Ovary (tissue), 10 donors: ENCODE measurements at regions of chr22 and their contacts with region 1.

Region 1: GRCh38 chr22:28009272-28009827 is 90.3 kb upstream of the PITPNB start:
- DNase-seq: peak; percentile 74 to 86 (median 85)
- H3K4me3 ChIP-seq: no peak overlapping the region
- H3K27ac ChIP-seq: no peak overlapping the region
- H3K4me1 ChIP-seq: no peaks in the 10 kb centered on the region
- H3K27me3 ChIP-seq: no peaks in the 10 kb centered on the region
- CTCF ChIP-seq: peak; percentile 84 to 95 (median 93)
- EP300 ChIP-seq: no peak
- POLR2A ChIP-seq: no peak

Region 2: GRCh38 chr22:26751217-26751616 is 1258.1 kb before region 1 on chr22:
- intact Hi-C with region 1: loop called (anchors 5 to 10 kb)
- DNase-seq: no peak
- H3K4me3 ChIP-seq: no peak overlapping the region
- H3K27ac ChIP-seq: no peak overlapping the region
- H3K4me1 ChIP-seq: peaks cover 5% of the 10 kb centered on the region
- H3K27me3 ChIP-seq: no peaks in the 10 kb centered on the region
- CTCF ChIP-seq: no peak
- EP300 ChIP-seq: no peak
- POLR2A ChIP-seq: no peak

Region 3: GRCh38 chr22:26756675-26757293 is 1252.6 kb before region 1 on chr22:
- intact Hi-C with region 1: loop called (anchors 5 to 10 kb)
- DNase-seq: peak; percentile 53 to 86 (median 79)
- H3K4me3 ChIP-seq: no peak overlapping the region
- H3K27ac ChIP-seq: no peak overlapping the region
- H3K4me1 ChIP-seq: peaks cover 1% of the 10 kb centered on the region
- H3K27me3 ChIP-seq: no peaks in the 10 kb centered on the region
- CTCF ChIP-seq: peak; percentile 85 to 95 (median 95)
- EP300 ChIP-seq: no peak
- POLR2A ChIP-seq: no peak

Region 4: DNA sequence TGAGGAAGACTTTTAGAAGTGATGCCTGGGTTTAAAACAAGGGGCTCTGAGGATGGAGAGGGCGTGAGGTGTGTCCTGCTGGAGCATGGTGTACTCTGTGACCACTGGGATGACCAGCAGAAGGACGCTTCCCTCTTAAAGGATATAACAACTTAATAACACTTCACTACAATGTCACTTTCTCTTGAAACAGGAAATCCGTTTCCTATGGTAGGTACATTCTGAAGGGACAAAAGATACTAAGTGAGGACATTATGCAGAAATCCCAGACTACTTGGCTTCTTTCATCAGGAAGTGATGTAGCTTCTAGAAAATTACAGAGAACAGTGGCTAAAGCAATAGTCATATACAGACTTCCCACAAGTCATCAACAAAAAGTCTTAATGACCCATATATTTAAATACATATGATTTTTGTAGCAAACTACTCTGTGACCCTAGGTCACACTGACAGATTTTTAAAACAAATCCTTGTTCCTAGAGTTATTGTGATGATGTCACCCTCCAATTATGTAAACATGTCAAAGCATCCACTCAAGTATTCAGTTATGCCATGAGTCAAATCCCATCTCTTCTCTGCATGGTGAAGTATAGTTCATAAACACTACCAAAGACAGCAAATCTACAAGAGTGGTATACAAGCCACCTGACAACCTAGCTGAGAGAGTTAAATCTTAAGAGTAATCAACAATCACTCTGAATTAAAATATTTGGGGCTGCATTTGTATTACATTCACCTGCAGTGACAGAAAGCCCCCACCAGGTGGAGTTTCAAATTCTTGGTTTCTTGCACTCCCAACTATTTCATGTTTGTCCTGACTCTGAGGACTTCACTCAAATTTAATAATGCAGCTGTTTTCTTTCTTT is 123.1 kb before region 1 on chr22:
- intact Hi-C with region 1: loop called (anchors 2 to 5 kb)
- DNase-seq: peak in 2 of 5 donors; percentile 45 to 66
- H3K4me3 ChIP-seq: no peak overlapping the region
- H3K27ac ChIP-seq: no peak overlapping the region
- H3K4me1 ChIP-seq: peaks cover 2% of the 10 kb centered on the region
- H3K27me3 ChIP-seq: no peaks in the 10 kb centered on the region
- CTCF ChIP-seq: peak; percentile 59 to 93 (median 92)
- EP300 ChIP-seq: no peak
- POLR2A ChIP-seq: no peak

Region 5: GRCh38 chr22:27930331-27931060 is 78.9 kb before region 1 on chr22:
- intact Hi-C with region 1: no loop called
- DNase-seq: no peak
- H3K4me3 ChIP-seq: no peak overlapping the region
- H3K27ac ChIP-seq: no peak overlapping the region
- H3K4me1 ChIP-seq: no peaks in the 10 kb centered on the region
- H3K27me3 ChIP-seq: no peaks in the 10 kb centered on the region
- CTCF ChIP-seq: no peak
- EP300 ChIP-seq: no peak
- POLR2A ChIP-seq: no peak

Region 6: GRCh38 chr22:27972732-27973698 is 36.3 kb before region 1 on chr22:
- intact Hi-C with region 1: no loop called
- DNase-seq: no peak
- H3K4me3 ChIP-seq: no peak overlapping the region
- H3K27ac ChIP-seq: no peak overlapping the region
- H3K4me1 ChIP-seq: peaks cover 2% of the 10 kb centered on the region
- H3K27me3 ChIP-seq: no peaks in the 10 kb centered on the region
- CTCF ChIP-seq: no peak
- EP300 ChIP-seq: no peak
- POLR2A ChIP-seq: no peak

Region 7: DNA sequence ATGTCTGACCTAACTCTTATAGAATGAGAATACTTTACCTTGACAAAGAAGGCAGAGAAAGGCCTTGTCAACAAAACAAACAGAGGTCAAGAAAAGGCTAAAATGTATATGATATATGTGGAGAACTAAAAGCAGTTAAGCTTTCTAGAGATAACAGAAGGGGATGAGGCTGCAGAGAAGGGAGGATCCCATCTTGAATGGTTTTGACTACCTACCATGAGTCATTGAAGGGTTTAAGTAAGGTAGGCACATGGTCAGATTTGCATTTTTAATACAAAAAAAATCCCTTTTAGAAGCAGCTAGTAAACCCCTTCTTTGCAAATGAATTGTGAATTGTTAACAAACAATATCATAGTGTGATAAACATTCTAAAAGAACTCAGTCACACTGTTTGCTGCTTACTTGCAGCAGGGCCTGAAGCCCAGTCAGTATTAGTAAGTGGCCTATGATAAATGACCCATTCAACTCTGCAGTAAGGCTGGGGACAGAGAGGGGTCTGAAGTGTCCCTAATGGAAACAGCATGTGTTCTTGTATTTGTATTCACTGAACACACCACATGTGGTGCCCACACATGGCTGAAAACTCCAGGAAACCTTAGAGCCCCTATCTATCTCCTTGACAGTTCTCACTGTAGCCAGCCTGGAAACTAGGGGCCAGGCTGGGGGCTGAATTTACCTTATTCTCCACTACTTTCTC is 238.5 kb after region 1 on chr22:
- intact Hi-C with region 1: no loop called
- DNase-seq: no peak
- H3K4me3 ChIP-seq: no peak overlapping the region
- H3K27ac ChIP-seq: no peak overlapping the region
- H3K4me1 ChIP-seq: peaks cover 8% of the 10 kb centered on the region
- H3K27me3 ChIP-seq: no peaks in the 10 kb centered on the region
- CTCF ChIP-seq: no peak
- EP300 ChIP-seq: no peak
- POLR2A ChIP-seq: no peak